ENCODE measurements at regions of chr2 and their contacts with region 1.

Region 1: GRCh38 chr2:20539133-20539719 is 92.4 kb downstream of the RHOB start:
- DNase-seq: peak; percentile 53 to 75 (median 72)
- ATAC-seq: peak; percentile 11 to 42 (median 16)
- H3K4me3 ChIP-seq: peak overlapping the region in 1 of 3 donors; percentile 18
- H3K27ac ChIP-seq: peak overlapping the region; percentile 73 to 90 (median 87)
- H3K4me1 ChIP-seq: peaks cover 0 to 68% (median 28%) of the 10 kb centered on the region in 4 donors
- H3K27me3 ChIP-seq: no peaks in the 10 kb centered on the region
- CTCF ChIP-seq: no peak
- POLR2A ChIP-seq: no peak

Region 2: GRCh38 chr2:20456636-20457426 is 82.4 kb before region 1 on chr2:
- intact Hi-C with region 1: no loop called
- DNase-seq: no peak
- ATAC-seq: peak in 1 of 4 donors; percentile 49
- H3K4me3 ChIP-seq: no peak overlapping the region
- H3K27ac ChIP-seq: no peak overlapping the region
- H3K4me1 ChIP-seq: no peaks in the 10 kb centered on the region
- H3K27me3 ChIP-seq: no peaks in the 10 kb centered on the region
- CTCF ChIP-seq: no peak
- POLR2A ChIP-seq: no peak

Region 3: GRCh38 chr2:20474757-20475566 is 64.3 kb before region 1 on chr2:
- intact Hi-C with region 1: loop called in 1 of 2 experiments (anchors 10 kb)
- DNase-seq: peak; percentile 34 to 91 (median 89)
- ATAC-seq: peak; percentile 87 to 96 (median 94)
- H3K4me3 ChIP-seq: no peak overlapping the region
- H3K27ac ChIP-seq: peak overlapping the region; percentile 63 to 89 (median 75)
- H3K4me1 ChIP-seq: peaks cover 0 to 49% (median 21%) of the 10 kb centered on the region in 4 donors
- H3K27me3 ChIP-seq: no peaks in the 10 kb centered on the region
- CTCF ChIP-seq: no peak
- POLR2A ChIP-seq: no peak

Region 4: GRCh38 chr2:20584637-20585321 is 45.6 kb after region 1 on chr2:
- intact Hi-C with region 1: loop called in 1 of 2 experiments (anchors 5 kb)
- DNase-seq: peak in 2 of 3 donors; percentile 31 to 32
- ATAC-seq: peak; percentile 20 to 64 (median 32)
- H3K4me3 ChIP-seq: no peak overlapping the region
- H3K27ac ChIP-seq: peak overlapping the region in 2 of 3 donors; percentile 33 to 54
- H3K4me1 ChIP-seq: peaks cover 0 to 30% (median 13%) of the 10 kb centered on the region in 4 donors
- H3K27me3 ChIP-seq: no peaks in the 10 kb centered on the region
- CTCF ChIP-seq: no peak
- POLR2A ChIP-seq: no peak